Activated CD4-positive, alpha-beta memory T cell treated with anti-CD3 and anti-CD28 coated beads for 36 hours (primary cell): ENCODE measurements at regions of chr19 and their contacts with region 1.

Region 1: DNA sequence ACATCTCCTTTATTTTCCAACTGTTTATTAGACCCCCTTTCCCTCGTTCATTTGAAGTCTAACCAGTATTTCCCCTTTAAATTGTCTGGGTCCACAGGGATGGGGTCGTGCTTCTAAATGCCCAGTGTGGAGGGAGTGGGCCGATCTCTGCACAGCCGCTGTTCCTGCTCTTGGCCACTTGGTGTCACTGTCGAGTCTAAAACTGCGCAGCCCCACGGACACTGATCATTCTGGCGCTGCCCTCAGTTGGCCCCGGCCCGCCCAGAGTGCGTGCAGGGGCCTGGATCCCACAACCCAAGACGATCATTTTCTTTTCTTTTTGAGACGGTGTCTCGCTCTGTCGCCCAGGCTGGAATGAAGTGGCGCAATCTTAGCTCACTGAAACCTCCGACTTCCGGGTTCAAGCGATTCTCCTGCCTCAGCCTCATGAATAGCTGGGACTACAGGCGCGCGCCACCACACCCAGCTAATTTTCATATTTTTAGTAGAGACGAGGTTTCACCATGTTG is 12.0 kb downstream of the WDR88 start:
- DNase-seq: peak; percentile 75
- H3K4me3 Mint-ChIP-seq: peak overlapping the region; percentile 31
- H3K27ac Mint-ChIP-seq: peak overlapping the region; percentile 28
- H3K4me1 Mint-ChIP-seq: peaks cover 4% of the 10 kb centered on the region
- H3K27me3 Mint-ChIP-seq: peaks cover 7% of the 10 kb centered on the region

Region 2: GRCh38 chr19:33040994-33041827 is 102.7 kb before region 1 on chr19:
- CTCF ChIA-PET with region 1: no interaction called
- POLR2A ChIA-PET with region 1: no interaction called
- intact Hi-C with region 1: no loop called
- DNase-seq: no peak
- H3K4me3 Mint-ChIP-seq: no peak overlapping the region
- H3K27ac Mint-ChIP-seq: no peak overlapping the region
- H3K4me1 Mint-ChIP-seq: peaks cover 8% of the 10 kb centered on the region
- H3K27me3 Mint-ChIP-seq: no peaks in the 10 kb centered on the region

Region 3: DNA sequence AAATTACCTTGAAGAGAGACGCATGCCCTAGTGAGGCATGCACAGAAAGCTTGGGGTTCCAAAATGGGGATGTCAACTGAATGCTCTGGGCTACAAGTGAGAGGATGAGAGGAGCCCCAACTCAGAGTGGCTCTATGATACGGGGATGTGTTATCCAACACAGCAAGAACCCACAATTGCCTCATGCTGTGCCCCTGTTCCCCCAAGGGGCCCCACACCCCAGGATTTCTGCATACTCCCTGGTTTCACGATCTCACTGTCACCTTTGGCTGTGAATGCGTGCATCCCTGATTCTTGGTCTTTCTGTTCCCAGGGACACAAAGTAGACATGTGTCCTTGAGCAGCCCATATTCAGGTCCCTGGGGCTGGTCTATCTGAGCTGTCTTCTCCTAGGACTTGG is 17.2 kb after region 1 on chr19:
- CTCF ChIA-PET with region 1: interaction called, 24 read pairs
- POLR2A ChIA-PET with region 1: no interaction called
- intact Hi-C with region 1: loop called (anchors 2 kb)
- DNase-seq: no peak
- H3K4me3 Mint-ChIP-seq: no peak overlapping the region
- H3K27ac Mint-ChIP-seq: peak overlapping the region; percentile 86
- H3K4me1 Mint-ChIP-seq: peaks cover 32% of the 10 kb centered on the region
- H3K27me3 Mint-ChIP-seq: no peaks in the 10 kb centered on the region

Region 4: DNA sequence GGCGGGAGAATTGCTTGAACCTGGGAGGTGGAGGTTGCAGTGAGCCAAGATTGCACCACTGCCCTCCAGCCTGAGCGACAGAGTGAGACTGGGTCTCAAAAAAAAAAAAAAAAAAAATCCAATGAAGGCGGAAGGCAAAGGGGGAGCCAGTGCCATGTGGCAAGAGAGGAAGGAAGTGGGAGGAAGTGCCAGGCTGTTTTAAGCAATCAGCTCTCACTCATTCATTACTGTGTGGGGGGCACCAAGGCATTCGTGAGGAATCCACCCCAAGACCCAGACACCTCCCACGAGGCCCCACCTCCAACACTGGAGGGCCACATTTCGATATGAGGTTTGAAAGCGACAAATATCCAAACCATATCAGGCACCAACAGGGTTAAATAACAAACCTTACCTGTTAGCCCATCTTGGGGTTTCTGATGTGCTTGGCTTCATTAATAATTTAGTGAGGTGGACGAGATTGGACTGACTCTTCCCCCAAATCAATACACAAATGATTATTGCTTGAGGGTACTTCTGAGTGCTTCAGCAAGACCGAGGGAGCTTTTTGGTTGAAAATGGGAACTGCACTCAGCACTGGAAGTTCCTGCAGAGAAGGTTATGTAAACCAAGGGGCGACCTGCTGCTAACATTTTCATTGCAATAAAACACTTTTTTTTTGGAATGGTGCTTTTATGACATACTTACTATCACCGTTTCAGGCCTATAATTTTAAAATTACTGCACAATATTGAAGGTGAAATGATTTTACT is 42.7 kb after region 1 on chr19:
- CTCF ChIA-PET with region 1: interaction called, 54 read pairs
- POLR2A ChIA-PET with region 1: no interaction called
- intact Hi-C with region 1: loop called (anchors 1 kb)
- DNase-seq: no peak
- H3K4me3 Mint-ChIP-seq: no peak overlapping the region
- H3K27ac Mint-ChIP-seq: no peak overlapping the region
- H3K4me1 Mint-ChIP-seq: no peaks in the 10 kb centered on the region
- H3K27me3 Mint-ChIP-seq: peaks cover 7% of the 10 kb centered on the region

Region 5: DNA sequence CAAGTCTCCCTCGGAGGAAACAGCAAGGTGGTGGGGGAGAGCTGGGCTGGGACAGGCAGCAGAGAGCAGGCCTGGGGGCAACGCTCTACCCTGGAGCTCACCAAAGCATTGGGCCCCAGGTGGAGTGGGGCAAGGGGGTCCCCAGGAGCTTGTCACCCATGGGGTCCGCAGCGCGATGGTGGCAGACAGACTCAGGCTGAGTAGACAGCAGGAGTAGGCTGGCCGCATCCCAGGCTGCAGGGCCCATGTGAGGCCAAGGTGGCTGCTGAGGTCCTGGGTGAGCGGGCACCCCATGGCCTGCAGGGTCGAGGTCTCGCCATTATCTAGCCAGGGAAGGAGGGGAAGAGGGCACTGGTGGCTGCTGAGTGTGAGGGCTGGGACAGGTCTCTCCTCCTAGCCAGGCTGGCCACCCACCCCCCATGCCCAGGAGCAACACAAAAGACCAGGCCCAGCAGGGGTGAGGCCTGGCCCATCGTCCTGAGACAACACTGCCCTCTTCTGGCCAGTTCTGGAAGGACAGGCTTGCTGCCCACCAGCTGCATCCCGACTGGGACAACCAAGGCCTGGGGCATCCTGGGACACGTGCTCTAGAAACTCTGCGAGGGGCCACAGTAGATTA is 262.7 kb after region 1 on chr19:
- CTCF ChIA-PET with region 1: interaction called, 3 read pairs
- POLR2A ChIA-PET with region 1: no interaction called
- intact Hi-C with region 1: loop called (anchors 5 kb)
- DNase-seq: peak; percentile 84
- H3K4me3 Mint-ChIP-seq: no peak overlapping the region
- H3K27ac Mint-ChIP-seq: no peak overlapping the region
- H3K4me1 Mint-ChIP-seq: peaks cover 4% of the 10 kb centered on the region
- H3K27me3 Mint-ChIP-seq: no peaks in the 10 kb centered on the region